ENCODE measurements at regions of chr5 and their contacts with region 1.

Region 1: GRCh38 chr5:2038321-2039179 is 155.8 kb upstream of the IRX4 start:
- DNase-seq: peak; percentile 79 to 97 (median 94)
- ATAC-seq: peak; percentile 100
- H3K4me3 ChIP-seq: peak overlapping the region; percentile 44
- H3K27ac ChIP-seq: no peak overlapping the region
- H3K4me1 ChIP-seq: peaks cover 0 to 5% of the 10 kb centered on the region in 2 experiments; a peak in 2 of 5 replicates
- H3K27me3 ChIP-seq: peaks cover 25 to 41% of the 10 kb centered on the region in 2 experiments; a peak in 4 of 5 replicates
- CTCF ChIP-seq: peak; percentile 78 to 94 (median 83)
- EP300 ChIP-seq: no peak
- POLR2A ChIP-seq: no peak
- RAD21 ChIP-seq: peak; percentile 56 to 75

Region 2: DNA sequence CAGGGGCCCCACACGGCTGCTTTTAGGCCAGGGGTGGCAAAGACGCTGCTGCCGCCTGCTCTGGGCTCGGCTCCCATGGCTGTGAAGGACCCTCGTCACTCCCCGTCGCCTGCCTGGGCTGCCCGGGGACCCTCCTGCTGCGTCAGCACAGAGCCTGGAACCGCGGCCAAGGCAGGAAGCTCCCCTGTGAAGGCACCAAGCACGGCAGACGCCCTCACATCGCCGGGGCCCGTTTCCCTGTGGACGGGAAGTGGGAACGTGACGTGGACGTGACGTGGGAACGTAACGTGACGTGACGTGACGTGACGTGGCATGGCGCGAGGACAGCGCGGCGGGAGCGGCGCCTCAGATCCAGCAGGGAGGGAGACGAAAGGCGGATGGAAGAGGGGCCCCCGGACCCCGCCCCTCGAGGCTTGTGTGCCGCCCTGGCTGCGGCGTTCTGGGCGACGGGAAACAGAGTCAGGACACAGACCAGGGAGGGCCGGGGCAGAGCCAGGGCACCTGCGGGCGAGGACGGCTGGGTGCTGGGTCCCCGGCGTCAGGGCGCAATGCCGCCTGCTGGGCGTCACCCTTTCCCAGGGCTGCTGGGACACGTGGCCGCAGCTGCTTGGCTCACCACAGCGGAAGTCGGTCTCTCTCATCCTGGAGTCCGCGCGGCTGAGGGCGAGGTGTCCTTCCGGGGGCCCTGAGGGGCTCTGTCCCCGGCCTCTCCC is 292.0 kb before region 1 on chr5:
- CTCF ChIA-PET with region 1: no interaction called
- POLR2A ChIA-PET with region 1: no interaction called
- in situ Hi-C with region 1: loop called (anchors 10 kb)
- intact Hi-C with region 1: no loop called
- DNase-seq: peak; percentile 46 to 63 (median 52)
- ATAC-seq: peak; percentile 47
- H3K4me3 ChIP-seq: peak overlapping the region; percentile 12; the same call in 1 of the 2 replicates
- H3K27ac ChIP-seq: no peak overlapping the region
- H3K4me1 ChIP-seq: peaks cover 0 to 15% of the 10 kb centered on the region in 2 experiments; a peak in 2 of 5 replicates
- H3K27me3 ChIP-seq: peaks cover 61 to 82% of the 10 kb centered on the region in 2 experiments; a peak in 4 of 5 replicates
- CTCF ChIP-seq: no peak
- EP300 ChIP-seq: no peak
- POLR2A ChIP-seq: no peak
- RAD21 ChIP-seq: no peak

Region 3: GRCh38 chr5:1763548-1763911 is 275.0 kb before region 1 on chr5:
- CTCF ChIA-PET with region 1: interaction called, 3 read pairs
- POLR2A ChIA-PET with region 1: no interaction called
- in situ Hi-C with region 1: no loop called
- intact Hi-C with region 1: loop called (anchors 1 kb)
- DNase-seq: peak; percentile 51 to 78 (median 63)
- ATAC-seq: peak; percentile 95
- H3K4me3 ChIP-seq: no peak overlapping the region
- H3K27ac ChIP-seq: no peak overlapping the region
- H3K4me1 ChIP-seq: peaks cover 0 to 9% of the 10 kb centered on the region in 2 experiments; a peak in 1 of 5 replicates
- H3K27me3 ChIP-seq: peaks cover 69 to 84% of the 10 kb centered on the region in 2 experiments
- CTCF ChIP-seq: peak; percentile 83 to 88 (median 87)
- EP300 ChIP-seq: no peak
- POLR2A ChIP-seq: no peak
- RAD21 ChIP-seq: peak; percentile 59 to 82

Region 4: GRCh38 chr5:2112173-2113025 is 73.8 kb after region 1 on chr5:
- CTCF ChIA-PET with region 1: no interaction called
- POLR2A ChIA-PET with region 1: no interaction called
- in situ Hi-C with region 1: no loop called
- intact Hi-C with region 1: no loop called
- DNase-seq: no peak
- ATAC-seq: no peak
- H3K4me3 ChIP-seq: no peak overlapping the region
- H3K27ac ChIP-seq: no peak overlapping the region
- H3K4me1 ChIP-seq: 0 out of 5 replicates have a peak, but pooled peaks cover 0 to 3% of the 10 kb centered on the region in 2 experiments
- H3K27me3 ChIP-seq: peaks cover 27 to 36% of the 10 kb centered on the region in 2 experiments; a peak in 4 of 5 replicates
- CTCF ChIP-seq: no peak
- EP300 ChIP-seq: no peak
- POLR2A ChIP-seq: no peak
- RAD21 ChIP-seq: no peak

Region 5: GRCh38 chr5:2124434-2125170 is 86.1 kb after region 1 on chr5:
- CTCF ChIA-PET with region 1: no interaction called
- POLR2A ChIA-PET with region 1: no interaction called
- in situ Hi-C with region 1: no loop called
- intact Hi-C with region 1: no loop called
- DNase-seq: no peak
- ATAC-seq: no peak
- H3K4me3 ChIP-seq: no peak overlapping the region
- H3K27ac ChIP-seq: no peak overlapping the region
- H3K4me1 ChIP-seq: no peaks in the 10 kb centered on the region
- H3K27me3 ChIP-seq: peaks cover 11 to 27% of the 10 kb centered on the region in 2 experiments; a peak in 4 of 5 replicates
- CTCF ChIP-seq: no peak
- EP300 ChIP-seq: no peak
- POLR2A ChIP-seq: no peak
- RAD21 ChIP-seq: no peak